HepG2 (cell line): ENCODE measurements at regions of chr3 and their contacts with region 1.

Region 1: GRCh38 chr3:79032686-79033318 is 735.0 kb downstream of the ROBO1 start:
- DNase-seq: peak; percentile 52
- ATAC-seq: peak; percentile 66
- H3K4me3 ChIP-seq: no peak overlapping the region
- H3K27ac ChIP-seq: no peak overlapping the region
- H3K4me1 ChIP-seq: peaks cover 23% of the 10 kb centered on the region
- H3K27me3 ChIP-seq: no peaks in the 10 kb centered on the region
- CTCF ChIP-seq: peak; percentile 69
- EP300 ChIP-seq: no peak
- POLR2A ChIP-seq: no peak
- RAD21 ChIP-seq: peak; percentile 64; the same call in 1 of the 2 replicates

Region 2: DNA sequence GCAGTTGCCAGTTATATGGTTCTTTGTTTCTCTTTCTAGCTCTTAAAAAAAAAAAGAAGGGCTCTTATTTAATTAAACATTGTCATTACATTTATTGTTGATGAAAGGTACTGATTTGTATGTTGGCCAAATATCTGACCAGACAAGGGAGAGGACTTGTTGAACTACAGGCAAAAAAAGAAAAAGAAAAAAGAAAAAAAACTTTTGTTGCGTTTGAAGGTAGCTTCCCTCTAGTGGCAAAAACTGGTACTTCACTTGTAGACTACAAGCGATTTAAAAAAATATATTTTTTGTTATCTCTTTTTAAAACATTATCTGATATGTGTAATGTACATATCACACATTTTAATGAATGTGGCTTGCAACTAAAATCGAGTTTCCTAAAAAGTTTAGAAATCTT is 1712.3 kb before region 1 on chr3:
- CTCF ChIA-PET with region 1: no interaction called
- POLR2A ChIA-PET with region 1: no interaction called
- in situ Hi-C with region 1: no loop called
- intact Hi-C with region 1: loop called (anchors 10 kb)
- DNase-seq: peak; percentile 25
- ATAC-seq: no peak
- H3K4me3 ChIP-seq: no peak overlapping the region
- H3K27ac ChIP-seq: no peak overlapping the region
- H3K4me1 ChIP-seq: peaks cover 26% of the 10 kb centered on the region
- H3K27me3 ChIP-seq: no peaks in the 10 kb centered on the region
- CTCF ChIP-seq: peak; percentile 31; the same call in 1 of the 2 replicates
- EP300 ChIP-seq: no peak
- POLR2A ChIP-seq: no peak
- RAD21 ChIP-seq: no peak

Region 3: DNA sequence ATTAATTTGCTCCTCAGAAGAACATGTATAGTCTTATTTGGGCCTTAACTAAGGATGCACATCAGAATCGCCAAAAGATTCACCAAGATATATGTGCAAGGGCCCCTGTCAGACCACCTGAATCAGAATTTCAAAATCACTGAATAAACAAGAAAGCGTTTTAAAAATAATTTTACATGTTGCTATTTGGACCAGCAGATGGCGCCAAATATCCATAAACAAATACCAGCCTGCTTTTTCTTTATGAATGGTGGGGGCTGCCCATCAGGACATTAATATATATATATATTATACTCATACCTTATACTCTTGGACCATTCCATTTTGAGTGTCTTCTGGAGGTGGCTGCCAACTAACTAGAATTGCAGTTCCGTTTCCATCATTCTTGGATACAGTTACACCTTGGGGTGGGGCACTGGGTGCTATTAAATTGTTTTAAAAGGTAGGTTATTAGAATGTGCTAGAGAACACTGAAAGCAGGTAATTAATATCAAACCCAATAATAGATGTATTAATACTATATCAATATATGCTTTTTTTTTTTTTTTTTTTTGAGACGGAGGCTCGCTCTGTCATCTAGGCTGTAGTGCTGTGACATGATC is 373.3 kb before region 1 on chr3:
- CTCF ChIA-PET with region 1: interaction called, 51 read pairs
- POLR2A ChIA-PET with region 1: no interaction called
- in situ Hi-C with region 1: no loop called
- intact Hi-C with region 1: loop called (anchors 1 kb)
- DNase-seq: peak; percentile 29
- ATAC-seq: no peak; the same call in 2 of the 3 replicates
- H3K4me3 ChIP-seq: no peak overlapping the region
- H3K27ac ChIP-seq: no peak overlapping the region
- H3K4me1 ChIP-seq: no peaks in the 10 kb centered on the region
- H3K27me3 ChIP-seq: no peaks in the 10 kb centered on the region
- CTCF ChIP-seq: peak; percentile 58
- EP300 ChIP-seq: no peak
- POLR2A ChIP-seq: no peak
- RAD21 ChIP-seq: peak; percentile 36

Region 4: GRCh38 chr3:78785004-78785403 is 247.8 kb before region 1 on chr3:
- CTCF ChIA-PET with region 1: no interaction called
- POLR2A ChIA-PET with region 1: no interaction called
- in situ Hi-C with region 1: no loop called
- intact Hi-C with region 1: no loop called
- DNase-seq: no peak
- ATAC-seq: peak; percentile 33; the same call in 1 of the 3 replicates
- H3K4me3 ChIP-seq: no peak overlapping the region
- H3K27ac ChIP-seq: no peak overlapping the region
- H3K4me1 ChIP-seq: 0 out of 2 replicates have a peak, but pooled peaks cover 9% of the 10 kb centered on the region
- H3K27me3 ChIP-seq: no peaks in the 10 kb centered on the region
- CTCF ChIP-seq: no peak
- EP300 ChIP-seq: no peak
- POLR2A ChIP-seq: no peak
- RAD21 ChIP-seq: no peak

Region 5: DNA sequence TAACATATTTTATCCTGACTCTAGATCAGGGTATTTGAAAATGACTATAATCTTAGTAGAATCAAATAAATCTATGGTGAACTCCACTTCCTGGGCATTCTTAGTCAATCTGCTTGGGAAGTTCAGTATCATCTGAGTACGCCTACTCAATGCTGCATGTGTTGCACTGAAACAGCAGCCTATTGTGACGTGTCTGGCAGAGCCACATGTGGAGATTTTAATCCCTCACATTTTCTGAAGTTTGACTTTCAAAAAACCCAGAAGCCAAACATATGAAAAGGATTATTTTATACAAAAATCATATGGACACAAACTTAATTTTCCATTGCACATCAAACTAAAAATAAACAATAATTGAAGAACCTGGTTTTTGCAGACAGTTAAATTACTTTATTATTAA is 63.3 kb before region 1 on chr3:
- CTCF ChIA-PET with region 1: no interaction called
- POLR2A ChIA-PET with region 1: no interaction called
- in situ Hi-C with region 1: no loop called
- intact Hi-C with region 1: no loop called
- DNase-seq: no peak
- ATAC-seq: no peak
- H3K4me3 ChIP-seq: no peak overlapping the region
- H3K27ac ChIP-seq: no peak overlapping the region
- H3K4me1 ChIP-seq: peaks cover 26% of the 10 kb centered on the region
- H3K27me3 ChIP-seq: no peaks in the 10 kb centered on the region
- CTCF ChIP-seq: no peak
- EP300 ChIP-seq: no peak
- POLR2A ChIP-seq: no peak
- RAD21 ChIP-seq: no peak

Region 6: GRCh38 chr3:78988324-78988723 is 44.5 kb before region 1 on chr3:
- CTCF ChIA-PET with region 1: no interaction called
- POLR2A ChIA-PET with region 1: no interaction called
- in situ Hi-C with region 1: no loop called
- intact Hi-C with region 1: loop called (anchors 5 kb)
- DNase-seq: peak; percentile 59
- ATAC-seq: peak; percentile 83
- H3K4me3 ChIP-seq: no peak overlapping the region; a peak in 1 of 6 replicates
- H3K27ac ChIP-seq: peak overlapping the region; percentile 44
- H3K4me1 ChIP-seq: peaks cover 67% of the 10 kb centered on the region
- H3K27me3 ChIP-seq: no peaks in the 10 kb centered on the region
- CTCF ChIP-seq: peak; percentile 68
- EP300 ChIP-seq: peak in 1 of 2 experiments; percentile 74; a peak in 2 of 4 replicates
- POLR2A ChIP-seq: no peak
- RAD21 ChIP-seq: peak; percentile 39; the same call in 1 of the 2 replicates

Region 7: DNA sequence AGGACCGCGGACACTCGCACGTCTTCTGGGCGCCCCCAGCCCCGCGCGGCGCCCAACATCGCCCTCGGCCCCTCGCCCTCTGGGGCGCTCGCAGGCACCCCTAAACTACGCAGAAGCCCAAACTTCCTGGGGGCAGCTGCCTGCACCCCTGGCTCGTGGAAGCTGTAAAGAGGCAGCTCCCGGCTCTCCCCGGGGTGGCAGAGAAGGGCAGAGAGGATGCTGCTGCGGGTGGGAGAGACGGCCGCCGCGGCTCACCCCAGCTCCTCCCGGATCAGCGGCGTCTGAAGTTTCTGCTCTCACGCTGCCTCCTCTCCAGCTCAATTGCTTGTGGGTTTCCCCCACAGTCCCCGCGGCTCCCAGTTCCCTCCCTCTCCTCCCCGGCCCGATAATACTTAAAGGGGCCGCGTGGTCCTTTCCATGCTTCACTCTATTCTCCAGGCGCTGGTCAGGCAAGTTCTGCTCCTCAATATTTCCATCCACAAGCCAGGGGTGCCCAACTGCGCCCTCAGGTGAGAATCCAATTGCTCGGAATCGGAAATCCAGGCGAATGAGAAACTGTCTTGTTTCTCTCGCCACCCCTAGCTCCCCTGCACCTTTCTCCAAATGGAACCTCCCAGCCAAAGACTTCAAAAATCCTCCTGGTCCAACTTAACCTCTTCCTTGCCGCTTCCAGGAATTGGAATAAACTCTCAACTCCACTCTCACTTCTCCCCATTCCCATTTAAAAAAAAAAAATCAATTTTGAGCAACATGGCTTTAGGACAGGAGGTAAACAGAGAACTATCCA is 13.5 kb before region 1 on chr3:
- CTCF ChIA-PET with region 1: no interaction called
- POLR2A ChIA-PET with region 1: interaction called, 11 read pairs
- in situ Hi-C with region 1: no loop called
- intact Hi-C with region 1: no loop called
- DNase-seq: peak; percentile 84
- ATAC-seq: peak; percentile 89
- H3K4me3 ChIP-seq: peak overlapping the region; percentile 95 to 98 (median 95)
- H3K27ac ChIP-seq: peak overlapping the region; percentile 98
- H3K4me1 ChIP-seq: peaks cover 18% of the 10 kb centered on the region
- H3K27me3 ChIP-seq: no peaks in the 10 kb centered on the region; a peak in 1 of 5 replicates
- CTCF ChIP-seq: peak; percentile 53
- EP300 ChIP-seq: peak in 1 of 2 experiments; percentile 3; a peak in 1 of 4 replicates
- POLR2A ChIP-seq: peak; percentile 80 to 90
- RAD21 ChIP-seq: no peak